ENCODE measurements at regions of chr1 and their contacts with region 1.

Region 1: DNA sequence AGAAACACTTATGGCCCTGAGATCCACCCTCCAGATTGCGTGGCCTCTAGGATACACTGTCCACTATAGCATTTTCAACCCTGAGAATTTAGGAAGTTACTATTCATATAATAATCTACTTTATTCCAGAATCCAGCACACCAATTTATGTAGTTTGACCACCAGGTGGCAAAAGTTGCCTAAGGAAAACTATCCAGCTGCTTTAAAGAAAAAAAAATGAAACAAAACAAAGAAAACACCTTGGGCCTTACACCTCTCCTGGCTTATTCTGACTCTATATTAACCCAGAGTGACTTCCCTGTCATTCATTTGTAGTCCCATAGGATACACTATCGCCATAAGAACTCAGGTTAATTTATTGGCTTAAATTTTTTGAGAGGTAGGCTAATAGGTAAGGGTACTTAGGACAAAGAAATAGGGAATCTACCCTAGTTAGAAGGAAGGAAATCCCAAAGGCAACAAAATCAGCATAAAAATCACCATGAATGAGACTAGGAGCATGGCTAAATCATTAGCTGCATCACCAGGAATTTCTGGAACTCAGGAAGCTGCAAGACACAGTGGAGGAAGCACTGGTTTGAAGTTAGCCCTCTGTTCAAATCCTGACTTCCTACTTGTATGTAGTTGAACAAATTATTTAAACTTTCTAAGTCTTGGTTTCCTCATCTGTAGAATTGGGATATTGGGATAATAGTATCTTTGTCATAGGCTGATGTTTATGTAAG is 107.5 kb downstream of the SPAG17 start:
- DNase-seq: peak; percentile 44
- ATAC-seq: peak; percentile 72
- H3K4me3 ChIP-seq: no peak overlapping the region
- H3K27ac ChIP-seq: no peak overlapping the region
- H3K4me1 ChIP-seq: no peaks in the 10 kb centered on the region
- H3K27me3 ChIP-seq: no peaks in the 10 kb centered on the region; the same call in 1 of the 2 replicates
- CTCF ChIP-seq: peak; percentile 67
- POLR2A ChIP-seq: no peak
- RAD21 ChIP-seq: peak; percentile 66

Region 2: GRCh38 chr1:118122249-118123004 is 44.9 kb after region 1 on chr1:
- CTCF ChIA-PET with region 1: no interaction called
- POLR2A ChIA-PET with region 1: no interaction called
- dilution Hi-C with region 1: no loop called
- in situ Hi-C with region 1: no loop called
- intact Hi-C with region 1: loop called (anchors 2 kb)
- DNase-seq: peak; percentile 59
- ATAC-seq: peak; percentile 54
- H3K4me3 ChIP-seq: no peak overlapping the region
- H3K27ac ChIP-seq: no peak overlapping the region
- H3K4me1 ChIP-seq: peaks cover 2% of the 10 kb centered on the region; the same call in 1 of the 2 replicates
- H3K27me3 ChIP-seq: no peaks in the 10 kb centered on the region
- CTCF ChIP-seq: no peak
- POLR2A ChIP-seq: no peak
- RAD21 ChIP-seq: no peak

Region 3: GRCh38 chr1:118247593-118247992 is 170.1 kb after region 1 on chr1:
- CTCF ChIA-PET with region 1: interaction called, 3 read pairs
- POLR2A ChIA-PET with region 1: no interaction called
- dilution Hi-C with region 1: no loop called
- in situ Hi-C with region 1: no loop called
- intact Hi-C with region 1: loop called (anchors 2 kb)
- DNase-seq: peak; percentile 10
- ATAC-seq: peak; percentile 64; the same call in 1 of the 2 replicates
- H3K4me3 ChIP-seq: no peak overlapping the region
- H3K27ac ChIP-seq: no peak overlapping the region
- H3K4me1 ChIP-seq: no peaks in the 10 kb centered on the region
- H3K27me3 ChIP-seq: no peaks in the 10 kb centered on the region; the same call in 1 of the 2 replicates
- CTCF ChIP-seq: peak; percentile 47
- POLR2A ChIP-seq: no peak
- RAD21 ChIP-seq: peak; percentile 38

Region 4: DNA sequence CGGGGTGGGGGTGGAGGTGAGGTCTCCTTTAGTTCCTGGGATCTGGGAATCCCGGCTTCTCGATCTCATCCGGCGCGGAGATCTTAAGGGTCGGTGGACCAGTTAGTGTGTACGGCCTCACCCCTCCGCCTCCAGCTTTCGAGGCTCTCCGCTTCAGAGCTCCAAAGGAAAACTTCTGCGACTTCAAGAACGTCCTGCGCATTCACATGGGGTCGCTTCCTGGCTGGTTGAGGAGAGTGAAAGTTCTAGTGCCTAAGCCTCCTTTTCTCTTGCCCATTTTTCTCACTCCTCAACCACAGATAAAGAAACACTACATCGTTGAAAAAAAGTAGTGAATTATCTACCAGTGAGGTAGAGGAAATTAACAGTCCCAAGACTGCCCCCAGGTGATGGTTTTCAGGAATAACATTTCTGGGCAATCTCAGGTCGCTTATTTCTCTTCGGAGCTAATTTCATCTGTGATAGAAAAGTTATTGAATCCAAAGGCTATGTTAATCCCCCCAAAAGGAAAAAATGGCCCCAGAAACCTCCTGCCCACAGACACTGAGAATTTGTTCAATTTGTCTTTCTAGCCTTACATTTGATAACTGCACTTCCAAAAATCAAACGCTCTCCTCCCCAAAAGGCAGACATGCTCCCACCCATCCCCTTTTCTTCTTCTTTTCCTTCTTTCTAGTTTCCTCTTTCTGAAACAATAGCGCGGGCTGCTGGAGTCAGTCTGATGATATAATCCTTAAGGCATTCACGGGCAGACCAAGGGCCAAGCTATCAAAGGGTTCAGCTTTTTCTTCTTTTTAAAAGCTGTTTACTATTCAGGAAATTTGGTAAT is 931.2 kb after region 1 on chr1:
- CTCF ChIA-PET with region 1: no interaction called
- POLR2A ChIA-PET with region 1: no interaction called
- dilution Hi-C with region 1: no loop called
- in situ Hi-C with region 1: no loop called
- intact Hi-C with region 1: loop called (anchors 1 kb)
- DNase-seq: peak; percentile 54
- ATAC-seq: peak; percentile 82
- H3K4me3 ChIP-seq: peak overlapping the region; percentile 29
- H3K27ac ChIP-seq: no peak overlapping the region
- H3K4me1 ChIP-seq: no peaks in the 10 kb centered on the region; the same call in 1 of the 2 replicates
- H3K27me3 ChIP-seq: peaks cover 58% of the 10 kb centered on the region
- CTCF ChIP-seq: peak; percentile 61
- POLR2A ChIP-seq: no peak
- RAD21 ChIP-seq: peak; percentile 52